CD4-positive, alpha-beta memory T cell (primary cell): ENCODE measurements at regions of chr6 and their contacts with region 1.

Region 1: DNA sequence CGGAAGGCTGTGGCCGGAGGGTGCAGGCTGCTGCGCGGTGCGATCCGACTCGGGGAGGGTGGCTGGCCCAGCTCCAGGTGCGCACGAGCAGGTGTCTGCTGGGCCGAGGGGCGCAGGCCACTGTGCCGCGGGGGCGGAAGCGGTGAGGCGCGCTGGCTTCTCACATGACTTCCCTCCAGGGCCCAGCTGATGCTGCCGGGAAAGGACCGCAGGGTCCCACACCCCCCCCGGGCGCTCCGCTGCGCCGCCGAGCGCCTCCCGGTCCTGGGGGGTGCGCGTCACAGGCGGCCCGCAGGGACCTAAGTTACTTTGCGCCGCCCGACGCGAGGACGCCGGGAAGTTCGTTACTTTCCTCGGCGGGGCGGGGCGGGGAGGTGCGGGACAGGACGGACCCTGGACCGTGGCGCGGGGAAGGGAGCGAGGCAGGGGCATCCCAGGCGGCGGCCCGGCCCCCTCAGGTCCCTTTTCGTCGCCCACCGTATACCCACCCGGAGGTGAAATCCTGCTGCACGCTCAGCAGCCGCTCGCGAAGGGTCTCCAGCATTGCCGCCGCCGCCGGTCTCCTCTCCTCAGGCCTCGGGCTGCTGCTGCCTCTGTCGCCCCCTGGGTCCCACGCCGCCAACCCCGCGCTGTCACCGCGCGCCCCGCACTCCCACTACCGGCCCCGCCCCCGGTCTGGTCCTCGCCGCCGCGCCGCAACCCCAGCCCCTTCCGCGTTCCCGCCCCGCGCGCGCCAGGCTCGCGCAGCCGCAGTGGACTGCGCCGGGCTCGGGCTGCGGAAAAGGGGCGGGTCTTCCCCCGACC is at the start of gene DTNBP1:
- DNase-seq: peak; percentile 79 to 87 (median 81)
- H3K4me3 ChIP-seq: peak within 1 kb of the TSS; percentile 62 to 76
- H3K4me3 Mint-ChIP-seq: peak within 1 kb of the TSS; percentile 73 to 91 (median 86)
- H3K27ac ChIP-seq: peak within 1 kb of the TSS; percentile 60
- H3K27ac Mint-ChIP-seq: peak within 1 kb of the TSS; percentile 77 to 88 (median 86)
- H3K4me1 ChIP-seq: peaks cover 21% of the 10 kb centered on the region
- H3K4me1 Mint-ChIP-seq: peaks cover 24 to 47% (median 37%) of the 10 kb centered on the region in 4 donors
- H3K27me3 ChIP-seq: no peaks in the 10 kb centered on the region
- H3K27me3 Mint-ChIP-seq: peaks cover 0 to 4% of the 10 kb centered on the region in 2 donors
- total RNA-seq, gene DTNBP1: 24.1 TPM

Region 2: GRCh38 chr6:15691250-15691869 is 28.8 kb after region 1 on chr6:
- CTCF ChIA-PET with region 1: interaction called, 3 read pairs
- POLR2A ChIA-PET with region 1: interaction called, 3 read pairs
- intact Hi-C with region 1: loop called (anchors 1 kb)
- DNase-seq: peak; percentile 75 to 80 (median 77)
- H3K4me3 ChIP-seq: no peak overlapping the region
- H3K4me3 Mint-ChIP-seq: peak overlapping the region in 1 of 8 donors; percentile 11
- H3K27ac ChIP-seq: no peak overlapping the region
- H3K27ac Mint-ChIP-seq: peak overlapping the region in 4 of 7 donors; percentile 4 to 36 (median 20)
- H3K4me1 ChIP-seq: no peaks in the 10 kb centered on the region
- H3K4me1 Mint-ChIP-seq: peaks cover 4 to 8% (median 5%) of the 10 kb centered on the region in 4 donors
- H3K27me3 ChIP-seq: no peaks in the 10 kb centered on the region
- H3K27me3 Mint-ChIP-seq: peaks cover 7% of the 10 kb centered on the region in 2 donors